ENCODE measurements at regions of chr5 and their contacts with region 1.

Region 1: DNA sequence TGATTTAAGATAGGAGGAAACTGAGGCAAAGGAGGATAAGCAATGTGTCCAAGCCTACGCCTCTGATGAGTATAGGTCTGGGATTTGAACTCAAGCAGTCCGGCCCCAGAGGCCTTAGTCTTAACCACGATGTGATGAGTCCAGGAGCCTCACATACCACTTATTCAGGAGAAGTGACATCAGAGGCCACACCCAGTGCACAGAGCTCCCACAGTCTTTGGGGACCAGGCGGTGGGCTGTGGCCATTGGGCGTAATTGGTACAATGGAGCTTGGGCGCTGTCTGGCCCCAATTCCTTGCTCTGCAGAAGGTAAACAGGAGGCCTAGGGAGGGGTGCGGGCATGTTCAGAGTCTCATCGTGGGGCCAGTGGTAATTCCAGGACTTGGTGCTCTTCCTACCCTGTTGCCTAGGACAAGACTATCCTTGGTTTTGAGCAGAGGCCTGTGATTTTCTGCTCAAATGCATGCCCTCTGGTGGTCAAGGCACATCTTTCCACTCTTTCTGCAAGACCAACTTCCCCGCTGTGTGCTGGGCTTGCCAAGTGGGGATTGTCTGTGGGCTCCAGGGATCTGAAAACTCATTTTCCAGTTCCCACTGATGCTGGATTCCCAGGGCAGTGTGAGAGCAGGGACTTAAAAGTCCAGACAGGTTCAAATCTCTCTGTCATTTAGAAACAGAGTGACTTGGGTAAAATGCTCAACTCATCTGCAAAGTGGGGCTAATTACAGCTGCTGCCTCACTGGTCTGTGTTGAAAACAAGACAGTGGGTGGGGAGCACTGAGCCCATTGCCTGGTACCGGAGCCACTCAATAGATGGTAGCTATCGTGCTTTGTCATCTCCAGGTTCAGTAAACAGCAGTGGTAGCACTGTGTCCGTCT is 15.8 kb downstream of the NDST1 start:
- DNase-seq: no peak

Region 2: DNA sequence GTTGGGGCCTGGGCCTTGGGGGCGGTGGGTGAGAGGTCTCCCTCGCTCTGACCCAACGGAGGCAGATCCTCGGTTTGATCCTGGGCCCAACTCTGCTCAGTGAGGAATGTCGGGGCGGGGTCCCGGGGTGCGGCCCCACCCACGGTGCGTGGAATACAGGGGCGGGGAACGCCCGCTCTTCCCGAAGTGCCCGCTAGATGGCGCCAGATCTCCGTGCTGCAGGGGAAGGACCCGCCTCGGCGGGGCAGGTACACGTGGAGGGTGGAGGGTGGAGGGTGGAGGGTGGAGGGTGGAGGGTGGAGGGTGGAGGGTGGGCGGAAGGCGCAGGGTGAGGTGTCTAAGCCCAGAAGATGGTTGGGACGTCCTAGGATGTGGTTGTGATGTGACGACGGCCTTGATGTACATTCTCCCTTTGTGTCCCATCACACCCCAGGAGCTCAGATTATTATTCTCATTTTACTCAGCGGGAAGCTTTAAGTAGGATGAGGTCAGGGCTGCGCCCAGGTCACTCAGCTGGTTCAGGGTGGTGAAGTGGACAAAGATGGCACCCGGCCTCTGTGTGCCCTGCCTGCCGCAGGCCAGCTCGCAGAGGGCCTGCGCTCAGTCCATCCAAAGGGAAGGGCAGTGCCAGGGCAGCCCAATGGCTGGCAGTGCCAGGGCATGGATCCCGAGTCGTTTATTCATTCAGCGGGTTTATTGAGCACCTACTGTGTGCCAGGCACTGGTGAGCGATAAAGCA is 64.7 kb before region 1 on chr5:
- intact Hi-C with region 1: loop called (anchors 5 kb)
- DNase-seq: peak; percentile 92

Region 3: GRCh38 chr5:150486402-150487198 is 37.1 kb before region 1 on chr5:
- intact Hi-C with region 1: loop called (anchors 2 to 5 kb)
- DNase-seq: peak; percentile 82

Measured in posterior vena cava (tissue), 2 donors.